ENCODE measurements at regions of chr1 and their contacts with region 1.

Region 1: DNA sequence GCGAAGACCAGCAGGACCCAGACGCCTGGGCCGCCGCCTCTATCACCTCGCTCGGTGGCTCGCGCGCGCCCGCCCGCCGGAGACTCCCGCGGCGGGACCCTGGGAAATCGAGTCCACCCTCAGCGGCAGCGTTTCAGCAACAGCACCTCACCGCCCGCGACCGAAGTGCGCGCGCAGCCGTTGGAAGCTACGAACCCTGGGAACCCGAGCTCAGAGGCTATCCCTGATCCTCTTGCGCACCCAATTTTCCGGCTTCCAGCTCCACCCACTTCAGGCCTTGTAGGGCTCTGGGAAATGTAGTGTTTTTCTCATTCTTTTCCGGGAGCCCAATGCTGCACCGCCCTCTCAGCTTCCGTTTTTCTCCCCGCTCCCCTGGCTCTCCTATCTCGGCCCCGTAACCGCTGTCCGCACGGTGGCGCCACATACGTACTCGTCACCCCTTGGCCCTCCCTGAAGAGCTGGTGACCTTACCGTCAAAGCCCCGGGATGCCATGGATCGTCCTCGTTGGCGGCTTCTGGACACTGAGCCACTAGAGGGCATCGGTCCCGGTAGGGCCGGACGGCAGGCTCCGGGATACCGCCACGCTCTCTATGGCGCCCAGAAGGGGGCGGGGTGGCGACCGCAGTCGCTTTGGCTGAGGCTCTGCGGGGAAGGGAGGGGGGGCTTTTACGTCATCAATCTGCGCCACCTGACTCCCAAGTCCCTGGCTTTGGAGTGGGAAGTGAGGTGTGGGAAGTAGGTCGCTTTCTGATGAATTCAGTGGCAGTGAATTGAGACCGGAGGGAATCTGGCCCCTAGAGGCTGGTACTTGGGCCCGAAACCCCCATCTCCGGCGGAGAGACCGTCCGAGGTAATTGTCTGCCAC is at the starts of genes ODR4 and TPR:
- DNase-seq: peak; percentile 98
- H3K4me3 Mint-ChIP-seq: peak within 1 kb of the TSS; percentile 98
- H3K27ac Mint-ChIP-seq: peak within 1 kb of the TSS; percentile 95
- H3K4me1 Mint-ChIP-seq: peaks cover 38% of the 10 kb centered on the region
- H3K27me3 Mint-ChIP-seq: no peaks in the 10 kb centered on the region
- total RNA-seq, gene ODR4: 13.0 to 15.5 TPM
- total RNA-seq, gene TPR: 217 to 226 TPM

Region 2: DNA sequence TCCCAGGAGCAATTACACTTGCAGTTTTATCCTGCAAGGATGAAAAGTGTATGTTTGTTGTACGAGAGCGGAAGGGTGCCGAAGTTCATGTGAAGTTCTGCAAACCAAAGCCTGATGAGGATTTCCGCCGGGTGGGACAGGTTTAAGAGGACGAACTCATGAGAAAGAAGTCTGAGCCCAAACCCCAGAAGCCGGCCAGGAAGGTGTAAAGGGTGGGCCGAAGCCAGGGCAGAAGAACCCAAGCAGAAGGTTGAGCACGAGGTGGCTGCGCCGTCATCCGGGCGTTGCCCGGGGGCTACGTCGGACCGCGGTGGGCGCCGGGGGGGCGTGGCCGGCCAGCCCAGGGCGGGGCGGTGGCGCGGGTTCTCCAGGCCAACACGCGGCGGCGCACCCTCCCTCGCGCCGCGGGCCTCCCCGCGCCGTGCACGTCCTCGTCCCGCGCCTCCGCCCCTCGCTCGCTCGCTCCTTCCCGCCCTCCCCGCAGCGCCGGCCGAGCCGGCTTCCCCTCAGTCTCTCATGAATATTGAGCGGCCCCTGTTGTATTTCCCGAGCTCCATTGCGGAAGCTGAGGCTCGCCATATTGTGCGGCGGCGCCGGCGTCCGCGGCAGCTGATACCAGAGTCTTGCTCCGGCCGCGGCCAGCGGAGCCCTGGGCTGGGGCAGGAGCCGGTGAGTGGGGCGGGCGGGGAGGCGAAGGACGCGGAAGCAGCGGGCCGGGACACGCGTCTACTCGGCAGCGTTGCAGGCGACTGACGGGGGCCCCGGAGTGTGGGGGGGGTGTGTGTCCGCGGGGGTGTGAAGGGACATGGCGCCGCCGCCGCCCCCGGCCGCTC is 1330.1 kb before region 1 on chr1 and contains the start of gene RNF2:
- CTCF ChIA-PET with region 1: no interaction called
- intact Hi-C with region 1: loop called (anchors 10 kb)
- DNase-seq: peak; percentile 83
- H3K4me3 Mint-ChIP-seq: peak within 1 kb of the TSS; percentile 89
- H3K27ac Mint-ChIP-seq: peak within 1 kb of the TSS; percentile 69
- H3K4me1 Mint-ChIP-seq: peaks cover 30% of the 10 kb centered on the region
- H3K27me3 Mint-ChIP-seq: no peaks in the 10 kb centered on the region
- total RNA-seq, gene RNF2: 19.2 to 23.4 TPM

Region 3: GRCh38 chr1:186289943-186290545 is 85.3 kb before region 1 on chr1:
- CTCF ChIA-PET with region 1: interaction called, 3 read pairs
- intact Hi-C with region 1: loop called (anchors 1 kb)
- DNase-seq: peak; percentile 55
- H3K4me3 Mint-ChIP-seq: peak overlapping the region; percentile 43
- H3K27ac Mint-ChIP-seq: peak overlapping the region; percentile 99
- H3K4me1 Mint-ChIP-seq: peaks cover 90% of the 10 kb centered on the region
- H3K27me3 Mint-ChIP-seq: no peaks in the 10 kb centered on the region

Region 4: DNA sequence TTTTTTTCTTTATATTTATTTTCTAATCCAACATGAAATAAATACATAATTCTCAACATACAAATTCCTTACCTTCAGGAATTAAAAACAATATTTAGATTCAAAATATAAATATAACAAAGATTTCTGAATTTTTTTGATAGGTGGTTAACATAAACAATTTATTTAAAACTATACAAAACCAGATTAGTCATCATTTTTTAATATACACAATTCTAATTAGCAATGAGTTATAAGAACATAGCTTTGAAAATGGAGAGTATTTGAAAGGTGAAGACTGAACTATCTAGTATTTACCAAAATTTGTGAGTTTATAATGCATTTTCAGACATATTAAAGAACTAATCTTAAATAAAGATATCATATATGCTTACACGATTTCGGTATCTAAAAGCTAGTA is 37.8 kb before region 1 on chr1:
- CTCF ChIA-PET with region 1: interaction called, 13 read pairs
- intact Hi-C with region 1: loop called (anchors 5 kb)
- DNase-seq: no peak
- H3K4me3 Mint-ChIP-seq: no peak overlapping the region
- H3K27ac Mint-ChIP-seq: no peak overlapping the region
- H3K4me1 Mint-ChIP-seq: peaks cover 1% of the 10 kb centered on the region
- H3K27me3 Mint-ChIP-seq: no peaks in the 10 kb centered on the region

Region 5: DNA sequence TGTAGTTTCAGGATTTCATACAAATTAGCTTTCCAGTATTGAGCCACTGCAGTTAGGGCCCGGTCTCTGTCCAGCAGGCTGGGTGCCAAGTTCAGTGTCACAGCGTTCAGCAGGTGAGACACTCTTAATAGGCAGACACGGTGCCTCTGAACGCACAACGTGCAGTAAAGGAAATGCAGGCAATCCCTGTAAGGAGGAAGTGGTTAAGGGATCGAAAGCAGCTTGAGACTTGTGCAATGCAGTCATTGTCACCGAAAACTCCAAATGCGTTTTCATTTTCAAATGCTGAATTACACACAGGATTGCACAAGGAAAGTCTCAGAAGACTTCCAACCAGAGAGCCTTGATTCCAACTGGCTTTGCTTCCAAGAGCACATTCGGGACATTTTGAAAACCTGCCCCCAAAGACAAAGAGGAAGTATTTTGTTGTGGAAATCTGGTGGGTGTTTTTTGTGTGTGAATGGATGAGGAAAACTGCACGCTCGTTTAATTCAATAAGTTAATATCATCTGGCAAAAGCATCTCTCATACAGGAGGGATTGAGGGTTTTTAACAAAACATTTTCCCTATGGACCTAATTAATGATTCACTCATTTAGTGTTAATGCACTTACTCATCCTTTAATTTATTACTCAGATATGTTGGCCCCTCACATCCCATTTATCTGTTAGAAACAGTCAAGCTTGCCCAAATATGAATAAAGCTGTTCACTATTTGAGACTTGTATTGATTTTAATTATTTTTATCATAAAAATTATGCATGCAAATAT is 243.3 kb after region 1 on chr1:
- CTCF ChIA-PET with region 1: no interaction called
- intact Hi-C with region 1: loop called (anchors 1 kb)
- DNase-seq: peak; percentile 77
- H3K4me3 Mint-ChIP-seq: no peak overlapping the region
- H3K27ac Mint-ChIP-seq: no peak overlapping the region
- H3K4me1 Mint-ChIP-seq: peaks cover 42% of the 10 kb centered on the region
- H3K27me3 Mint-ChIP-seq: peaks cover 2% of the 10 kb centered on the region

Measured in activated naive CD4-positive, alpha-beta T cell treated with anti-CD3 and anti-CD28 coated beads for 36 hours (primary cell).